Cardiac septum (tissue), 1 donor: ENCODE measurements at regions of chr2 and their contacts with region 1.

Region 1: GRCh38 chr2:160180172-160180571 is 19.9 kb downstream of the ITGB6 start:
- DNase-seq: no peak

Region 2: GRCh38 chr2:160006475-160006874 is 173.7 kb before region 1 on chr2:
- intact Hi-C with region 1: loop called (anchors 5 kb)
- DNase-seq: no peak